ENCODE measurements at regions of chr7 and their contacts with region 1.

Region 1: GRCh38 chr7:124276019-124276622 is 243.3 kb upstream of the TMEM229A start:
- DNase-seq: peak; percentile 36 to 62
- H3K4me3 ChIP-seq: no peak overlapping the region
- H3K4me3 Mint-ChIP-seq: no peak overlapping the region
- H3K27ac Mint-ChIP-seq: no peak overlapping the region
- H3K4me1 ChIP-seq: no peaks in the 10 kb centered on the region
- H3K4me1 Mint-ChIP-seq: no peaks in the 10 kb centered on the region
- H3K27me3 ChIP-seq: no peaks in the 10 kb centered on the region
- H3K27me3 Mint-ChIP-seq: peaks cover 6% of the 10 kb centered on the region
- CTCF ChIP-seq: peak; percentile 56 to 63

Region 2: GRCh38 chr7:123941391-123942180 is 334.5 kb before region 1 on chr7:
- CTCF ChIA-PET with region 1: no interaction called
- POLR2A ChIA-PET with region 1: no interaction called
- intact Hi-C with region 1: no loop called
- DNase-seq: no peak
- H3K4me3 ChIP-seq: no peak overlapping the region
- H3K4me3 Mint-ChIP-seq: no peak overlapping the region
- H3K27ac Mint-ChIP-seq: no peak overlapping the region
- H3K4me1 ChIP-seq: no peaks in the 10 kb centered on the region
- H3K4me1 Mint-ChIP-seq: no peaks in the 10 kb centered on the region
- H3K27me3 ChIP-seq: no peaks in the 10 kb centered on the region
- H3K27me3 Mint-ChIP-seq: peaks cover 5% of the 10 kb centered on the region
- CTCF ChIP-seq: no peak

Region 3: DNA sequence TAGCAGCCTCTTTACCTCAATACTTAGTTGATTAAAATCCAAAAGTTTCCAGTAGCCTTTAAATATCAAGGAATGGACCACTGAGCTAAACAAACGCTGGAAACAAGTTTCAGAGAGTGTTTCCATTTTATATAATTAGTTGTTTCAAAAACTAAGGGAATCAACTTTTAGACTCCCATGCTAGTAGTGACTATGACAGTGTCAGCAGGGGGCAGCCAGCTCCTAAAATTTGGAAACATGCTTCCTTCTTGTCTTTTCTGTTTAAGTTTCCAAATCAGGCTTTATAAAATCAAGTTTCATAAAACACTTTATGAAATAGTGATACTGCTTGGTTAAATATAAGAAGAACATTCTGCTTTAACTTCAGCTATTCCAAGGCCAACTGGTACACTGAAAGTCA is 105.1 kb before region 1 on chr7:
- CTCF ChIA-PET with region 1: no interaction called
- POLR2A ChIA-PET with region 1: no interaction called
- intact Hi-C with region 1: loop called (anchors 2 kb)
- DNase-seq: peak in 1 of 2 experiments; percentile 20
- H3K4me3 ChIP-seq: no peak overlapping the region
- H3K4me3 Mint-ChIP-seq: no peak overlapping the region
- H3K27ac Mint-ChIP-seq: no peak overlapping the region
- H3K4me1 ChIP-seq: no peaks in the 10 kb centered on the region
- H3K4me1 Mint-ChIP-seq: no peaks in the 10 kb centered on the region
- H3K27me3 ChIP-seq: no peaks in the 10 kb centered on the region
- H3K27me3 Mint-ChIP-seq: peaks cover 3% of the 10 kb centered on the region
- CTCF ChIP-seq: peak in 1 of 2 experiments; percentile 46

Region 4: DNA sequence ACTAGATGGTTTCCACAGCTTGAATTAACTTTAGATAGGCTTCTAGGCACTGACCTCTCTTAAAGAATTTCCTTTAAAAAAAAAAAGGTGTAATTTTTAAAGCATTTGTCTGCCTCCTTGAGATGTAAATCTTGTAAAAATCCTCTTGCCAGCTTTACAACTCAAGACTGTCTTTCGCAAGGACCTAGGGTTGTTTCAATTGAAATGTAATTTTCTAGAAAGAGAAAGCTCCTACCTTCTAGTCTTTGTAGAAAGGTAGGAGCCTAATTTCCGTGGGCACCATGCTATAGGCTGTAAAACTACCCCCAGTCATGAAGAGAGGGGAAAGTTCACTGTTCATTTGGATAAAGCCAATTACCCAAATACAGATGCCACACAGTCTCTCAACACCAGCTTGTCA is 14.4 kb before region 1 on chr7:
- CTCF ChIA-PET with region 1: no interaction called
- POLR2A ChIA-PET with region 1: no interaction called
- intact Hi-C with region 1: loop called (anchors 2 kb)
- DNase-seq: no peak
- H3K4me3 ChIP-seq: no peak overlapping the region
- H3K4me3 Mint-ChIP-seq: no peak overlapping the region
- H3K27ac Mint-ChIP-seq: no peak overlapping the region
- H3K4me1 ChIP-seq: no peaks in the 10 kb centered on the region
- H3K4me1 Mint-ChIP-seq: no peaks in the 10 kb centered on the region
- H3K27me3 ChIP-seq: no peaks in the 10 kb centered on the region
- H3K27me3 Mint-ChIP-seq: peaks cover 3% of the 10 kb centered on the region
- CTCF ChIP-seq: no peak

Region 5: GRCh38 chr7:124322561-124322960 is 46.4 kb after region 1 on chr7:
- CTCF ChIA-PET with region 1: no interaction called
- POLR2A ChIA-PET with region 1: no interaction called
- intact Hi-C with region 1: no loop called
- DNase-seq: no peak
- H3K4me3 ChIP-seq: no peak overlapping the region
- H3K4me3 Mint-ChIP-seq: no peak overlapping the region
- H3K27ac Mint-ChIP-seq: no peak overlapping the region
- H3K4me1 ChIP-seq: no peaks in the 10 kb centered on the region
- H3K4me1 Mint-ChIP-seq: no peaks in the 10 kb centered on the region
- H3K27me3 ChIP-seq: no peaks in the 10 kb centered on the region
- H3K27me3 Mint-ChIP-seq: peaks cover 2% of the 10 kb centered on the region
- CTCF ChIP-seq: no peak

Measured in Caco-2 (cell line).